MCF 10A (cell line): ENCODE measurements at regions of chr2 and their contacts with region 1.

Region 1: GRCh38 chr2:52810460-52810859 is 957.1 kb upstream of the CHAC2 start:
- DNase-seq: peak; percentile 44
- H3K4me3 Mint-ChIP-seq: no peak overlapping the region
- H3K27ac Mint-ChIP-seq: peak overlapping the region; percentile 59
- H3K4me1 Mint-ChIP-seq: peaks cover 11% of the 10 kb centered on the region
- H3K27me3 Mint-ChIP-seq: no peaks in the 10 kb centered on the region
- CTCF ChIP-seq: peak; percentile 30

Region 2: DNA sequence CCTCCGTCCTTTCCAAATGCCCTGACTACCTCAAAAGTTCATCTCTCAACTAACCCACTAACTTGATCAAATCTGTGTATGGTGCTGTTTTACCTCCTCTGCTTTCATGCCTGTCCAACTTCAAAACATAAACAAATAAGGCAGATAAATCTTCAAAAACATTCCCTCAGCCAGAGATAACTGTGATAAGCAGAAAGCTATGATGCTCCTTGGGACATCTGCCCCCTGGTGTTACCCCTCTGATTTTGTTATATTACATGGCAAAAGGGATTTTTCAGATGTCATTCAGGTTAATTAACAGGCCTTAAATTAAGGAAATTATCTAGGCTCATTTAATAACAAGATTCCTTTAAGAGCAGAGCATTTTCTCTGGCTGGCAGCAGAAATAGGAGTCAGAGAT is 146.3 kb after region 1 on chr2:
- CTCF ChIA-PET with region 1: interaction called, 4 read pairs
- POLR2A ChIA-PET with region 1: no interaction called
- intact Hi-C with region 1: loop called (anchors 5 kb)
- DNase-seq: no peak
- H3K4me3 Mint-ChIP-seq: no peak overlapping the region
- H3K27ac Mint-ChIP-seq: no peak overlapping the region
- H3K4me1 Mint-ChIP-seq: peaks cover 12% of the 10 kb centered on the region
- H3K27me3 Mint-ChIP-seq: no peaks in the 10 kb centered on the region
- CTCF ChIP-seq: peak; percentile 34

Region 3: GRCh38 chr2:52976253-52976949 is 165.9 kb after region 1 on chr2:
- CTCF ChIA-PET with region 1: interaction called, 7 read pairs
- POLR2A ChIA-PET with region 1: no interaction called
- intact Hi-C with region 1: loop called (anchors 1 kb)
- DNase-seq: peak; percentile 63
- H3K4me3 Mint-ChIP-seq: no peak overlapping the region
- H3K27ac Mint-ChIP-seq: no peak overlapping the region
- H3K4me1 Mint-ChIP-seq: no peaks in the 10 kb centered on the region
- H3K27me3 Mint-ChIP-seq: no peaks in the 10 kb centered on the region
- CTCF ChIP-seq: peak; percentile 70

Region 4: DNA sequence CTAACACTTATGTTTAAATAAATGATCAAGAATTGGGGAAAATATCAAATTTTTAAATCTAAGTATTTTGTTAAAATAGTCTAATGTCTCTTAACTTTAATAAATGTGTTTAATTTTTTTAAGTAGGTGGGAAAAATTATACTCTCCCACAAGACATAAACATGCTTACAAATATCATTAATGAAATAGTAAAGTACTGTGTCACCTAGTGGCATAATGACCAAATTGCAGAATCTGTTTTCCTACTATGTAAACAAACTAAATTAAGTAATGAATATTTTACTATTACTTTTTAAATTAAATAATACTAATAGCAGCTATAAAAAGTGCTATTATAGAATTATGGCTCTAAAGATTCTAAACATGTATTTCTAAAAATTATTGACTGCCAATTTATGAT is 905.1 kb after region 1 on chr2:
- CTCF ChIA-PET with region 1: interaction called, 6 read pairs
- POLR2A ChIA-PET with region 1: no interaction called
- intact Hi-C with region 1: loop called (anchors 10 kb)
- DNase-seq: peak; percentile 14
- H3K4me3 Mint-ChIP-seq: no peak overlapping the region
- H3K27ac Mint-ChIP-seq: no peak overlapping the region
- H3K4me1 Mint-ChIP-seq: no peaks in the 10 kb centered on the region
- H3K27me3 Mint-ChIP-seq: no peaks in the 10 kb centered on the region
- CTCF ChIP-seq: peak; percentile 39